ENCODE measurements at regions of chr6 and their contacts with region 1.

Region 1: GRCh38 chr6:163249651-163250101 is 164.8 kb upstream of the QKI start:
- DNase-seq: no peak
- ATAC-seq: no peak
- H3K4me3 ChIP-seq: no peak overlapping the region
- H3K4me3 Mint-ChIP-seq: no peak overlapping the region
- H3K27ac ChIP-seq: no peak overlapping the region
- H3K27ac Mint-ChIP-seq: no peak overlapping the region
- H3K4me1 ChIP-seq: peaks cover 0 to 2% of the 10 kb centered on the region in 2 experiments
- H3K4me1 Mint-ChIP-seq: peaks cover 0 to 2% (median 0%) of the 10 kb centered on the region in 3 donors
- H3K27me3 ChIP-seq: peaks cover 0 to 20% of the 10 kb centered on the region in 2 experiments
- H3K27me3 Mint-ChIP-seq: peaks cover 20 to 21% of the 10 kb centered on the region in 2 donors

Region 2: DNA sequence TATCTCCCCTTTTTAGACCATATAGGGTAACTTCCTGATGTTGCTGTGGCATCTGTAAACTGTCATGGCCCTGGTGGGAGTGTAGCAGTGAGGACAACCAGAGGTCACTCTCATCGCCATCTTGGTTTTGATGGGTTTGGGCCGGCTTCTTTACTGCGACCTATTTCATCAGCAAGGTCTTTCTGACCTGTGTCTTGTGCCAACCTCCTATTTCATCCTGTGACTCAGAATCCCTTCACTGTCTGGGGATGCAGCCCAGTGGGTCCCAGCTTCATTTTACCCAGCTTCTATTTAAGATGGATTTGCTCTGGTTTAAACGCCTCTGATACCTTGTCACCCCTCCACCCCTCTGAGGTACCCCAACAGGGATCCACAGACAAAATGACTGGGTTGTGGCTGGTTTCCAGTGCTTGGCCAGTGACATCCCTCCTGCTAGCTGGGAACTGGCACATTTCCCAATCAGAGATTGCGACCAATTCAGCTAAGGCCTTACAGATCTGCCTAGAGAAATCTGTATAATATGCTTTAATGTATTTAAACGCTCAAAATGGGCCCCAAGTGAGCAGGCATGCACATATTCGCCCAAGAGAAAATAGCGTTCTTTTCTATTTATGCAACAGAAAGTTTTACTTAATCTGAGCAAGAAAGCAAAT is 150.7 kb before region 1 on chr6:
- CTCF ChIA-PET with region 1: no interaction called
- POLR2A ChIA-PET with region 1: no interaction called
- DNase-seq: no peak
- ATAC-seq: no peak
- H3K4me3 ChIP-seq: no peak overlapping the region
- H3K4me3 Mint-ChIP-seq: no peak overlapping the region
- H3K27ac ChIP-seq: no peak overlapping the region
- H3K27ac Mint-ChIP-seq: no peak overlapping the region
- H3K4me1 ChIP-seq: no peaks in the 10 kb centered on the region
- H3K4me1 Mint-ChIP-seq: no peaks in the 10 kb centered on the region
- H3K27me3 ChIP-seq: peaks cover 0 to 4% of the 10 kb centered on the region in 2 experiments
- H3K27me3 Mint-ChIP-seq: peaks cover 0 to 4% of the 10 kb centered on the region in 2 donors

Region 3: GRCh38 chr6:163191704-163192537 is 57.8 kb before region 1 on chr6:
- CTCF ChIA-PET with region 1: no interaction called
- POLR2A ChIA-PET with region 1: interaction called in 1 of 2 experiments, 12 read pairs
- DNase-seq: no peak
- ATAC-seq: peak in 1 of 4 experiments; percentile 24
- H3K4me3 ChIP-seq: no peak overlapping the region
- H3K4me3 Mint-ChIP-seq: no peak overlapping the region
- H3K27ac ChIP-seq: no peak overlapping the region
- H3K27ac Mint-ChIP-seq: no peak overlapping the region
- H3K4me1 ChIP-seq: no peaks in the 10 kb centered on the region
- H3K4me1 Mint-ChIP-seq: no peaks in the 10 kb centered on the region
- H3K27me3 ChIP-seq: peaks cover 0 to 11% of the 10 kb centered on the region in 2 experiments
- H3K27me3 Mint-ChIP-seq: peaks cover 1 to 9% of the 10 kb centered on the region in 2 donors

Measured in T-cell (primary cell).